ENCODE measurements at regions of chr20 and their contacts with region 1.

Region 1: GRCh38 chr20:31723319-31724078 is 831 bp upstream of the BCL2L1 start:
- DNase-seq: peak; percentile 94 to 99 (median 97)
- ATAC-seq: peak; percentile 91 to 94 (median 93)
- H3K4me3 ChIP-seq: peak overlapping the region; percentile 83 to 96
- H3K4me3 Mint-ChIP-seq: peak overlapping the region; percentile 92 to 96 (median 92)
- H3K27ac ChIP-seq: peak overlapping the region; percentile 82
- H3K27ac Mint-ChIP-seq: peak overlapping the region; percentile 95 to 96
- H3K4me1 ChIP-seq: peaks cover 29 to 39% of the 10 kb centered on the region in 2 experiments
- H3K4me1 Mint-ChIP-seq: peaks cover 38 to 41% (median 39%) of the 10 kb centered on the region in 3 donors
- H3K27me3 ChIP-seq: no peaks in the 10 kb centered on the region
- H3K27me3 Mint-ChIP-seq: no peaks in the 10 kb centered on the region

Region 2: GRCh38 chr20:31572701-31573554 is 150.6 kb before region 1 on chr20:
- CTCF ChIA-PET with region 1: interaction called in 1 of 2 experiments, 12 read pairs
- POLR2A ChIA-PET with region 1: no interaction called
- DNase-seq: peak; percentile 69 to 91 (median 82)
- ATAC-seq: peak; percentile 89 to 95 (median 93)
- H3K4me3 ChIP-seq: peak overlapping the region; percentile 83 to 84
- H3K4me3 Mint-ChIP-seq: peak overlapping the region; percentile 85 to 88 (median 86)
- H3K27ac ChIP-seq: peak overlapping the region; percentile 81
- H3K27ac Mint-ChIP-seq: peak overlapping the region; percentile 85 to 88
- H3K4me1 ChIP-seq: peaks cover 5 to 21% of the 10 kb centered on the region in 2 experiments
- H3K4me1 Mint-ChIP-seq: peaks cover 18 to 29% (median 27%) of the 10 kb centered on the region in 3 donors
- H3K27me3 ChIP-seq: no peaks in the 10 kb centered on the region
- H3K27me3 Mint-ChIP-seq: no peaks in the 10 kb centered on the region

Region 3: DNA sequence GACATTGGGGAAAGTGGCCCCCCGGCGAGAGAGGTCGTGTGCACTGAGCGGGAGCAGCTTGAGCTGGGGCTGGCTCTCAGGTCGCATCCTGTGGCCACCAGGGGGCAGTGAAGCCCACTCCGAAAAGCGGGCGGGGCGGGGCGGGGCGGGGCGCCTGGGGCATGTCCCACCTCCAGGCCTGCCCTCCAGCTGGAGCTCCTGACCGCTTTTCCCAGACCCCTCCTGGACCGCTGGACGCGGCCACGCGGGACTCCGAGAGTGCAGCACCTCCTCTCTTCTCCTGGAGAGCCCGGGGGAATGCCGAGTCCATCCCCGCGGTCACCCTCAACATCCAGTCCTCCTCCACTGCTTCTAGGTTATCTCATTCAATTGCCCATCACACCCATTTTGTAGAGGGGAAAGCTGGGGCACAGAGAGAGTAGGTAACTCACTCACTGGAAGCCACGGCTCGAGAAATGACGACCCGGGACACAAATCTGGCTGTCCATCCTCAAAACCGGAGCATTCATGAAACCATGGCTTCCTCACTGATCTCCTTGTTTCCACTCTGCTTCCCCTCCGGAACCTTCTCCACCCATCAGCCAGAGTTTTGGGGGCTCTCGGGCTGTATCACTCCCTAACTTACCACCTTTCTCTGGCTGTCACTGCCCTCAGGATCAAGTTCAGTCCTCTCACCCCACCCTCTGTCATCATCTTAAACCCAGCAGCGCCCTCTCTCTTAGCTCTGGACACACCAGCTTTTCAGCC is 61.7 kb before region 1 on chr20:
- CTCF ChIA-PET with region 1: interaction called, 41 to 282 read pairs
- POLR2A ChIA-PET with region 1: interaction called, 3 to 13 read pairs
- DNase-seq: peak; percentile 41 to 90 (median 72)
- ATAC-seq: peak; percentile 86 to 90 (median 88)
- H3K4me3 ChIP-seq: peak overlapping the region; percentile 42 to 57
- H3K4me3 Mint-ChIP-seq: peak overlapping the region; percentile 68 to 85 (median 73)
- H3K27ac ChIP-seq: peak overlapping the region; percentile 14
- H3K27ac Mint-ChIP-seq: peak overlapping the region; percentile 82 to 86
- H3K4me1 ChIP-seq: peaks cover 4 to 41% of the 10 kb centered on the region in 2 experiments
- H3K4me1 Mint-ChIP-seq: peaks cover 24 to 39% (median 27%) of the 10 kb centered on the region in 3 donors
- H3K27me3 ChIP-seq: peaks cover 0 to 4% of the 10 kb centered on the region in 2 experiments
- H3K27me3 Mint-ChIP-seq: no peaks in the 10 kb centered on the region

Region 4: GRCh38 chr20:31684153-31685015 is 39.1 kb before region 1 on chr20:
- CTCF ChIA-PET with region 1: interaction called in 1 of 2 experiments, 17 read pairs
- POLR2A ChIA-PET with region 1: interaction called in 1 of 2 experiments, 4 read pairs
- DNase-seq: peak in 11 of 35 experiments; percentile 2 to 47 (median 20)
- ATAC-seq: peak; percentile 23 to 77 (median 60)
- H3K4me3 ChIP-seq: no peak overlapping the region
- H3K4me3 Mint-ChIP-seq: peak overlapping the region in 1 of 3 donors; percentile 52
- H3K27ac ChIP-seq: peak overlapping the region; percentile 47
- H3K27ac Mint-ChIP-seq: peak overlapping the region; percentile 62 to 84
- H3K4me1 ChIP-seq: peaks cover 17 to 65% of the 10 kb centered on the region in 2 experiments
- H3K4me1 Mint-ChIP-seq: peaks cover 78 to 86% (median 79%) of the 10 kb centered on the region in 3 donors
- H3K27me3 ChIP-seq: no peaks in the 10 kb centered on the region
- H3K27me3 Mint-ChIP-seq: no peaks in the 10 kb centered on the region

Region 5: GRCh38 chr20:31738729-31739561 is 15.4 kb after region 1 on chr20 and contains the start of gene TPX2:
- CTCF ChIA-PET with region 1: interaction called in 1 of 2 experiments, 10 read pairs
- POLR2A ChIA-PET with region 1: interaction called in 1 of 2 experiments, 8 read pairs
- DNase-seq: peak; percentile 39 to 88 (median 60)
- ATAC-seq: peak; percentile 97 to 99 (median 98)
- H3K4me3 ChIP-seq: peak within 1 kb of the TSS; percentile 81 to 88
- H3K4me3 Mint-ChIP-seq: no peak within 1 kb of the TSS
- H3K27ac ChIP-seq: peak within 1 kb of the TSS; percentile 31
- H3K27ac Mint-ChIP-seq: no peak within 1 kb of the TSS
- H3K4me1 ChIP-seq: peaks cover 12% of the 10 kb centered on the region in 2 experiments
- H3K4me1 Mint-ChIP-seq: no peaks in the 10 kb centered on the region
- H3K27me3 ChIP-seq: no peaks in the 10 kb centered on the region
- H3K27me3 Mint-ChIP-seq: no peaks in the 10 kb centered on the region
- total RNA-seq, gene TPX2: 0.99 to 3.0 (median 1.4) TPM

Region 6: GRCh38 chr20:31803552-31804291 is 80.2 kb after region 1 on chr20:
- CTCF ChIA-PET with region 1: no interaction called
- POLR2A ChIA-PET with region 1: no interaction called
- DNase-seq: peak in 1 of 35 experiments; percentile 4
- ATAC-seq: no peak
- H3K4me3 ChIP-seq: no peak overlapping the region
- H3K4me3 Mint-ChIP-seq: peak overlapping the region in 1 of 3 donors; percentile 1
- H3K27ac ChIP-seq: no peak overlapping the region
- H3K27ac Mint-ChIP-seq: no peak overlapping the region
- H3K4me1 ChIP-seq: peaks cover 4 to 11% of the 10 kb centered on the region in 2 experiments
- H3K4me1 Mint-ChIP-seq: peaks cover 13 to 17% (median 17%) of the 10 kb centered on the region in 3 donors
- H3K27me3 ChIP-seq: no peaks in the 10 kb centered on the region
- H3K27me3 Mint-ChIP-seq: no peaks in the 10 kb centered on the region

Region 7: DNA sequence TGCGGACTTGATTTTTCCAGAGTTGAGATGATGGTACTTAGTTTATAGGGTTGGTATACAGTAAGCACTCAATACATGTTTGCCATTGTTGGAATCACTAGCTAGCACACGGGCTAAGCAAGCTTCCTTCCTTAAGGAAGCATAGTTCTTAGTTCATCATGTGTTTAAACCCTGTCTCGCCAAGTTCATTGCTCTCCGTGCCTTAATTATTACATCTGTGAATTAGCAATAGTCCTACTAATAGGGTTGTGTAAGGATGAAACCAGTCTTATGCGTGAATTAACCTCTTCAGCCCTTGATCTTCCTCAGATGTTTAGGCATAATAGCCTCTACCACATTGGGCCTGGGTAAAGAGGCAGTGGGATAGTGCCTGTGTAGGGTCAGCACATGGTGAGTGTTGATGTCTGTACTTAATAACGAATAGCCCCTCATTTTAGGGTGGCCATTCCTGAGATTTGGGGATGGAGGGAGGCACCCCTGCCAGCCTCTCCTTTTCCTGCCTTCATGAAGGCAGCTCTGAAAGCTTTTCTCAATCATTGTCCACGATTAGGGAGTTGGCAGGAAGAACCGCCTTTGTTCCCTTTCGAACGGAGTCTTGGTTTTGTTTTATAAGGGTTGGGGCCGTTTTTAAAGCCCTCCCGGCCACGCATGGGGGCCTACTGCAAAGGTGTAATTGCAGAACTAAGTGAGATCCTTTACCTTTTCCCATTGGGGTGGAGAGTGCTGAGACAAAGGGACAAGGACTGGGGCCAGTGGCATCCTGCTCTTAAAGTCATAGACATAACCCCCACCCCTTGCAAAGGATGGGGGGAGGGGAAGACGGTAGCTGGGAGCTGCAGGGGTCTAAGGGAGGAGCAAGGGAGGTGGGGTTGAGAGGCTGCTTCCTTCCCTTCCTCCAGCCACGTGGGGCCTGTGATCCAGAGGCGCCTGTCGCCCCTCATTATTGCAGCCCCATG is 1040.8 kb after region 1 on chr20:
- CTCF ChIA-PET with region 1: no interaction called
- POLR2A ChIA-PET with region 1: no interaction called
- DNase-seq: no peak
- ATAC-seq: no peak
- H3K4me3 ChIP-seq: no peak overlapping the region
- H3K4me3 Mint-ChIP-seq: peak overlapping the region; percentile 39 to 85 (median 62)
- H3K27ac ChIP-seq: no peak overlapping the region
- H3K27ac Mint-ChIP-seq: no peak overlapping the region
- H3K4me1 ChIP-seq: peaks cover 0 to 20% of the 10 kb centered on the region in 2 experiments
- H3K4me1 Mint-ChIP-seq: peaks cover 10 to 13% (median 12%) of the 10 kb centered on the region in 3 donors
- H3K27me3 ChIP-seq: peaks cover 0 to 10% of the 10 kb centered on the region in 2 experiments
- H3K27me3 Mint-ChIP-seq: no peaks in the 10 kb centered on the region

Measured in T-cell (primary cell).